ENCODE measurements at regions of chr9 and their contacts with region 1.

Region 1: GRCh38 chr9:91207729-91208418 is 153.8 kb downstream of the AUH start:
- DNase-seq: no peak
- H3K4me3 Mint-ChIP-seq: peak overlapping the region; percentile 19
- H3K27ac Mint-ChIP-seq: peak overlapping the region; percentile 97
- H3K4me1 Mint-ChIP-seq: peaks cover 72% of the 10 kb centered on the region
- H3K27me3 Mint-ChIP-seq: no peaks in the 10 kb centered on the region

Region 2: GRCh38 chr9:91071185-91071990 is 136.5 kb before region 1 on chr9:
- CTCF ChIA-PET with region 1: no interaction called
- POLR2A ChIA-PET with region 1: interaction called, 17 read pairs
- intact Hi-C with region 1: loop called (anchors 1 kb)
- DNase-seq: peak; percentile 88
- H3K4me3 Mint-ChIP-seq: peak overlapping the region; percentile 9
- H3K27ac Mint-ChIP-seq: peak overlapping the region; percentile 85
- H3K4me1 Mint-ChIP-seq: peaks cover 18% of the 10 kb centered on the region
- H3K27me3 Mint-ChIP-seq: peaks cover 7% of the 10 kb centered on the region

Region 3: DNA sequence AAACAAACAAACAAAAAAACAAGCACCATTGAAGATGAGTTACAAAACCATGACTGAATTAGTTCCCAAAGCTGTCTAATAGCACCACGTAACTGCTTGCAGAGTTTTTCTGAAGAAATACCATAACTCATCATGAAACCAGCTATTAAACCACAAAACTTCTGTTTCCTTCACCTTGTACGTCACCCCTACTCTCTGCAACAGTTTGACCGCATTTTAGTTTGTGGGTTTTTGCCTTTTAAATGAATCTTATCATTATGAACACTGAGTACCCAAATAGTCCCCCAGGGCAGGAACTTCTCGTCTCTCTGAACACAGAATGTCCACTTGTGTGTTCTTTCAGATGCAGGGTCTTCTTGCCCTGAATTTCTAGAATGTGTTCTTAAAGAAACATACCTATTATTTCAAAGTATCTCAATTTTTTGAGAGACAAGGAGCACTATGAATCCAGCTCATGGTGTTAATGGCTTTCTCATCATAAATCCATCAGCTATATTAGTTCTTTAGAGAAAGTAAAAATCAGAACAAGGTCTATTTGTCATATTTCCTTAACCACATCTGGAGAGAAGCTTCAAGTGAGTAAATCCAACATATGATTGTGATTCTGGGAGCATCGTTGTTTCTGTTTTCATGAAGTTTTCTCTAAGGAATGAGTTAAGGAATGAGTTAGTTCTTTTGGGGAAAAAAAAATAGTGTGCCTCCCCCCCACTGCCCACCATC is 56.7 kb before region 1 on chr9:
- CTCF ChIA-PET with region 1: interaction called, 16 read pairs
- POLR2A ChIA-PET with region 1: interaction called, 42 read pairs
- intact Hi-C with region 1: loop called (anchors 1 kb)
- DNase-seq: peak; percentile 55
- H3K4me3 Mint-ChIP-seq: peak overlapping the region; percentile 32
- H3K27ac Mint-ChIP-seq: peak overlapping the region; percentile 97
- H3K4me1 Mint-ChIP-seq: peaks cover 72% of the 10 kb centered on the region
- H3K27me3 Mint-ChIP-seq: no peaks in the 10 kb centered on the region

Region 4: GRCh38 chr9:91223000-91223399 is 15.1 kb after region 1 on chr9:
- CTCF ChIA-PET with region 1: no interaction called
- POLR2A ChIA-PET with region 1: interaction called, 3 read pairs
- intact Hi-C with region 1: loop called (anchors 1 kb)
- DNase-seq: peak; percentile 49
- H3K4me3 Mint-ChIP-seq: no peak overlapping the region
- H3K27ac Mint-ChIP-seq: no peak overlapping the region
- H3K4me1 Mint-ChIP-seq: peaks cover 19% of the 10 kb centered on the region
- H3K27me3 Mint-ChIP-seq: no peaks in the 10 kb centered on the region

Region 5: DNA sequence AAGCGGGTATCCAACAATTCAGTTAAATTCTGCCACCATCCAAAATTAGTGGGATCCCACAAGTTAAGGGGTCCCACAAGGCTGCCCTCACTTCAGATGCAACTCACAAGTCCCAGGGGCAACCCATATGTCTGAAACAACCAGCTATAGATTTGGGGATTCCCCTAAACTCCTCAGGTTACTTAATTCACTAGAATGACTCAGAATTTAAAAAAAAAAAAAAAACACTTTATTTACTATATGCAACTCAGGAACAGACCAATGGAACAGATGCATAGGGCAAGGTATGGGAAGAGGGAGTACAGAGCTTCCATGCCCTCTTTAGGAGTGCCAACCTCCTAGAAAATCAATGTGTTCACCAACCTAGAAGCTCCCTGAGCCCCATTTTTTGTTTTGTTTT is 138.8 kb after region 1 on chr9:
- CTCF ChIA-PET with region 1: no interaction called
- POLR2A ChIA-PET with region 1: interaction called, 5 read pairs
- intact Hi-C with region 1: loop called (anchors 1 kb)
- DNase-seq: no peak
- H3K4me3 Mint-ChIP-seq: no peak overlapping the region
- H3K27ac Mint-ChIP-seq: no peak overlapping the region
- H3K4me1 Mint-ChIP-seq: peaks cover 57% of the 10 kb centered on the region
- H3K27me3 Mint-ChIP-seq: no peaks in the 10 kb centered on the region

Measured in activated CD4-positive, alpha-beta memory T cell treated with anti-CD3 and anti-CD28 coated beads for 36 hours (primary cell).